Naive thymus-derived CD4-positive, alpha-beta T cell (primary cell): ENCODE measurements at regions of chr13 and their contacts with region 1.

Region 1: DNA sequence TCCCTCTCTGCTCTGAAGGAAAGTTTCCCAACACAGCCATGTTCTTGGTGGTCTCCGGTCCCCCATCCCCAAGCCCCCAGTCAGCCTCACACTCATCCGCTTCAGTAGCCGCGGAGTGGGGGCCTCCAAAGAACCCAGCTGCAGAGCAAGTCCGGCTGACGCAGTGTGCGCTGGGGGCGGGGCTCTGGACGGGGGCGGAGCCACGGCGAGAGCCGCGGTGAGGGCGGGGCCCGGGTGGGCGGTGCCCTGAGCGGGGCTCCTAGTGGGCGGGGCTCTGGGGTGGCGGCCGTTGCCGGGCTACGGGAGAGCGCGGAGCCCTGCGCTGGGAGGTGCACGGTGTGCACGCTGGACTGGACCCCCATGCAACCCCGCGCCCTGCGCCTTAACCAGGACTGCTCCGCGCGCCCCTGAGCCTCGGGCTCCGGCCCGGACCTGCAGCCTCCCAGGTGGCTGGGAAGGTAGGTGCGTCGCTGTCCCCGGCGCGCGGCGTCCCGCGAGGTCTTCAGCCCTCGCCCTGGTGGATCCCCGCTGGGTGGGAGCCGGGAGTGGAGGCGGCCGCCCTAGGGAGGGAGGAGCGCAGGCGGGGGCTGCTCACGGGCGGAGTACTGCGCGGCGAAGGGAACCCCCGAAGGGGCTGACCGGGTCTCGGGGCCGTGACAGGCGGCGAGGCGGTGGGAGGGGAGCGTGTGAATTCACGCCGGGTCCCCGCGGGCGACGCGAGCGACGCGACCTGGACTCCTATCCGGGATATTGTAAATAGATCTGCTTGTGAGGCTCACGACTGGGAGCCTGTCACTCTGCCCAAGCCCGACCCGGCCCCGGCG is 9.1 kb downstream of the TNFRSF19 start:
- DNase-seq: peak; percentile 76 to 96 (median 87)
- ATAC-seq: peak; percentile 99
- H3K4me3 ChIP-seq: peak overlapping the region; percentile 79
- H3K4me3 Mint-ChIP-seq: peak overlapping the region; percentile 43 to 89 (median 81)
- H3K27ac ChIP-seq: peak overlapping the region; percentile 67
- H3K27ac Mint-ChIP-seq: peak overlapping the region in 3 of 9 donors; percentile 46 to 80 (median 65)
- H3K4me1 ChIP-seq: peaks cover 0 to 4% of the 10 kb centered on the region in 2 donors
- H3K4me1 Mint-ChIP-seq: peaks cover 10 to 22% (median 18%) of the 10 kb centered on the region in 7 donors
- H3K27me3 ChIP-seq: peaks cover 0 to 11% of the 10 kb centered on the region in 2 donors
- H3K27me3 Mint-ChIP-seq: peaks cover 34 to 72% (median 46%) of the 10 kb centered on the region in 5 donors

Region 2: GRCh38 chr13:23695711-23696464 is 116.6 kb after region 1 on chr13:
- CTCF ChIA-PET with region 1: no interaction called
- POLR2A ChIA-PET with region 1: no interaction called
- intact Hi-C with region 1: loop called in 1 of 2 experiments (anchors 1 kb)
- DNase-seq: peak; percentile 25 to 71 (median 68)
- ATAC-seq: peak; percentile 88
- H3K4me3 ChIP-seq: peak overlapping the region; percentile 49
- H3K4me3 Mint-ChIP-seq: peak overlapping the region; percentile 73 to 86 (median 81)
- H3K27ac ChIP-seq: peak overlapping the region; percentile 62
- H3K27ac Mint-ChIP-seq: peak overlapping the region; percentile 87 to 98 (median 95)
- H3K4me1 ChIP-seq: peaks cover 0 to 9% of the 10 kb centered on the region in 2 donors
- H3K4me1 Mint-ChIP-seq: peaks cover 6 to 31% (median 24%) of the 10 kb centered on the region in 7 donors
- H3K27me3 ChIP-seq: no peaks in the 10 kb centered on the region
- H3K27me3 Mint-ChIP-seq: peaks cover 0 to 7% (median 0%) of the 10 kb centered on the region in 5 donors

Region 3: GRCh38 chr13:23771552-23771951 is 192.3 kb after region 1 on chr13:
- CTCF ChIA-PET with region 1: no interaction called
- POLR2A ChIA-PET with region 1: no interaction called
- intact Hi-C with region 1: loop called in 1 of 2 experiments (anchors 10 kb)
- DNase-seq: no peak
- ATAC-seq: peak; percentile 34
- H3K4me3 ChIP-seq: no peak overlapping the region
- H3K4me3 Mint-ChIP-seq: no peak overlapping the region
- H3K27ac ChIP-seq: no peak overlapping the region
- H3K27ac Mint-ChIP-seq: no peak overlapping the region
- H3K4me1 ChIP-seq: no peaks in the 10 kb centered on the region
- H3K4me1 Mint-ChIP-seq: peaks cover 0 to 21% (median 9%) of the 10 kb centered on the region in 7 donors
- H3K27me3 ChIP-seq: peaks cover 0 to 2% of the 10 kb centered on the region in 2 donors
- H3K27me3 Mint-ChIP-seq: no peaks in the 10 kb centered on the region

Region 4: DNA sequence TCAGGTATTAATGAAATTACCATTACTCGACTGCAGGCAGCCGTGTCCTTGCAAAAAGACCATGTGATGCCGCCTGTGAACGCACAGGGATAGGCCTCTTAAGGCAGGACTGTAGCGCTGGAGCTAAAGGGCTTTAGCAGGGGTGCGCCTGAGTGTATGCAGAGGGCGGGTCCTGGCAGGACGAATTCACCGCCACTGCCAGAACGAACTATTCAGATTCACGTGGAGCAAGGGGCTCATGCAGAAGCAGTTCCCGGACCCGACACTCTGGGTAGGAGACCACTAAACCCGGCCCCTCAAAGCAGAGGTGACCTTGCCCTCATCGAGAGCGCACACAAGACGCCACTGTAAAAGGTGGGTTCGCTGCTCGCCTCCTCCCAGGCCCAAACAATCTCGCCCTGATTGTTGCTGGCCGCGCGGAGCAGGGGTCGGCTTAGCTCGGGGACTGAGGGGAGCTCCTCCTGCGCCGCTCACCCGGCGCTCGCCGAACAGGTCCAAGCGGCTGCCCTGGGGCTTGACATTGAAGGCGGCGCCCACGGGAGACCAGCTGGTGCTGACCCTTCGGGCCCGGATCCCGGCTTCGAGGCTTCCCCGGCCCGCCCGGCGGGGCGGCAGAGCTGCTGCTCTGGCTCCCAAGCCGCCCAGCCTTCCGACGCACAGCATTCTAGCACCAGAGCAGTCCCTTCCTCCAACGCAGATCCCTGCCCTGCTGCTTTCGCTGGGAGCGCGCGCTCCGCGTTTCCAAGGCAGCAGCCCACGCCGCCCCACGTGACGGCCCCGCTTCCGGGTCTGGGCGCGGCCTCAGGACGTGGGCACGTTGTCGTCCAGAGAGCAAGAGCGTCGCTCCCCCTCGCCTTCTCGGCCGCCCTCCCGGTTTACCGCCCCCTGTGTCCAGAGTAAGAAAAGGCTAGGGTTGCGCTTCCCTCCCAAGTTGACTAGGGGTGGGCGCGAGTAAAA is 309.7 kb after region 1 on chr13 and contains the start of gene MIPEP:
- CTCF ChIA-PET with region 1: no interaction called
- POLR2A ChIA-PET with region 1: interaction called, 3 read pairs
- intact Hi-C with region 1: loop called (anchors 1 kb)
- DNase-seq: peak; percentile 68 to 94 (median 83)
- ATAC-seq: peak; percentile 98
- H3K4me3 ChIP-seq: peak within 1 kb of the TSS; percentile 88
- H3K4me3 Mint-ChIP-seq: peak within 1 kb of the TSS; percentile 85 to 96 (median 92)
- H3K27ac ChIP-seq: peak within 1 kb of the TSS; percentile 70
- H3K27ac Mint-ChIP-seq: peak within 1 kb of the TSS; percentile 72 to 92 (median 84)
- H3K4me1 ChIP-seq: peaks cover 0 to 5% of the 10 kb centered on the region in 2 donors
- H3K4me1 Mint-ChIP-seq: peaks cover 12 to 31% (median 25%) of the 10 kb centered on the region in 7 donors
- H3K27me3 ChIP-seq: no peaks in the 10 kb centered on the region
- H3K27me3 Mint-ChIP-seq: no peaks in the 10 kb centered on the region
- total RNA-seq, gene MIPEP: 8.0 to 10.5 (median 9.2) TPM

Region 5: GRCh38 chr13:24220086-24220703 is 640.9 kb after region 1 on chr13:
- CTCF ChIA-PET with region 1: no interaction called
- POLR2A ChIA-PET with region 1: no interaction called
- intact Hi-C with region 1: loop called in 1 of 2 experiments (anchors 10 kb)
- DNase-seq: peak in 7 of 9 donors; percentile 59 to 77 (median 70)
- ATAC-seq: peak; percentile 88
- H3K4me3 ChIP-seq: no peak overlapping the region
- H3K4me3 Mint-ChIP-seq: no peak overlapping the region
- H3K27ac ChIP-seq: no peak overlapping the region
- H3K27ac Mint-ChIP-seq: peak overlapping the region in 2 of 9 donors; percentile 10 to 50
- H3K4me1 ChIP-seq: peaks cover 0 to 7% of the 10 kb centered on the region in 2 donors
- H3K4me1 Mint-ChIP-seq: peaks cover 7 to 44% (median 22%) of the 10 kb centered on the region in 7 donors
- H3K27me3 ChIP-seq: no peaks in the 10 kb centered on the region
- H3K27me3 Mint-ChIP-seq: no peaks in the 10 kb centered on the region

Region 6: DNA sequence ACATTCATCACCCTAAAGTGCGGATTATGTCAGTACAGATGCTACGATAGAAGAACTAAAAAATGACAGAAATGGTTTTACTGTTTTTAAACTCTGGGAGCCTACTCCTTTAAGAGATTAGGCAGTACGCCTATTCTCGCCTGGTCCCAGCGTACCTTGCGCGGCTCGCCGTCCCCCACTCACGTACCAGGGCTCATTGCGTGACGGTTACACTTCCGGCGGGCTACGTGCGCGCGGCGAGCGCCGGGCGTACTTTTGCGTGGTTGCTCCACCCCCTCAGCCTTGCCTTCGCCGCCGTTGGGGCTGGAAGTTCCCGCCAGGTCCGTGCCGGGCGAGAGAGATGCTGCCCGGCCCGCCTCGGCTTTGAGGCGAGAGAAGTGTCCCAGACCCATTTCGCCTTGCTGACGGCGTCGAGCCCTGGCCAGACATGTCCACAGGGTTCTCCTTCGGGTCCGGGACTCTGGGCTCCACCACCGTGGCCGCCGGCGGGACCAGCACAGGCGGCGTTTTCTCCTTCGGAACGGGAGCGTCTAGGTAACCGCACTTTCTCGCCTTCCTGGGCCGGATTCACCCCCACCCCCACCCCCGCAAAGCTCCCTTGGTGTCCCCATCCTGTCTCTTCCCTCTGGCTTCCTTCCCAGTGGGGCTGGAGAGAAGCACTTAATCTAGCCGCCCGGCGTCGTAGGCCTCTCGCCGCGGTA is 1722.2 kb after region 1 on chr13 and contains the start of gene NUP58:
- CTCF ChIA-PET with region 1: no interaction called
- POLR2A ChIA-PET with region 1: no interaction called
- intact Hi-C with region 1: loop called in 1 of 2 experiments (anchors 5 kb)
- DNase-seq: peak; percentile 83 to 94 (median 92)
- ATAC-seq: peak; percentile 99
- H3K4me3 ChIP-seq: peak within 1 kb of the TSS; percentile 64
- H3K4me3 Mint-ChIP-seq: peak within 1 kb of the TSS; percentile 86 to 95 (median 92)
- H3K27ac ChIP-seq: peak within 1 kb of the TSS; percentile 93
- H3K27ac Mint-ChIP-seq: peak within 1 kb of the TSS; percentile 87 to 97 (median 93)
- H3K4me1 ChIP-seq: peaks cover 13 to 22% of the 10 kb centered on the region in 2 donors
- H3K4me1 Mint-ChIP-seq: peaks cover 21 to 51% (median 47%) of the 10 kb centered on the region in 7 donors
- H3K27me3 ChIP-seq: peaks cover 0 to 5% of the 10 kb centered on the region in 2 donors
- H3K27me3 Mint-ChIP-seq: peaks cover 7 to 19% (median 10%) of the 10 kb centered on the region in 5 donors
- total RNA-seq, gene NUP58: 41.1 to 89.1 (median 57.0) TPM